ENCODE measurements at regions of chr2 and their contacts with region 1.

Region 1: DNA sequence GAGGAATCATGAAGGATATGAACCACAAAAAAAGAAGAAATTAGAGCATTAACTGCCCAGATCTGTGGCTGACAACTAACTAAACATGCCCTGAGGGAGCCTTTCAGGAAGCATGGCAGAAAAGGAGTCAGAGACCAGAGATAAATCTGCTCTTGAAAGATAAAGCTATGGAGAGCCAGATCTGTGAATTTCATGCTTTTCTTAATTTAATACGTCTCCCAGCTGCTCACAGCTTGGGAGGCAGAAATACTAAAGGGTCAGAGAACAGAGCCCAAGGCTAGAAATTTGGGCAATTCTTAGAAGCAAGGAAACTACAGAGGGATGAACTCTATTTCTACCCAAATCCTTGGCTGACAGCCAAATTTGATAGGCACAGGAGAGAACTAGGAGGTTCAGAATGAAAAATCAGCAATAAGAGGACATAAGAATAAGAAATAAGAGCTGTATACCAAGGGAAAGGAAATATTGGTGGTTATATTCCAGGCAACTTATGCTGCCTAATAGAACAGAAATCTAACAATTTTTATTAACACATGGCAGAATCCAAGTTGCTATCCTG is 222.9 kb upstream of the DPP10 start:
- DNase-seq: no peak
- ATAC-seq: no peak
- H3K4me3 ChIP-seq: no peak overlapping the region
- H3K27ac ChIP-seq: no peak overlapping the region
- H3K4me1 ChIP-seq: no peaks in the 10 kb centered on the region
- H3K27me3 ChIP-seq: no peaks in the 10 kb centered on the region
- CTCF ChIP-seq: no peak
- EP300 ChIP-seq: no peak
- POLR2A ChIP-seq: no peak
- RAD21 ChIP-seq: no peak

Region 2: DNA sequence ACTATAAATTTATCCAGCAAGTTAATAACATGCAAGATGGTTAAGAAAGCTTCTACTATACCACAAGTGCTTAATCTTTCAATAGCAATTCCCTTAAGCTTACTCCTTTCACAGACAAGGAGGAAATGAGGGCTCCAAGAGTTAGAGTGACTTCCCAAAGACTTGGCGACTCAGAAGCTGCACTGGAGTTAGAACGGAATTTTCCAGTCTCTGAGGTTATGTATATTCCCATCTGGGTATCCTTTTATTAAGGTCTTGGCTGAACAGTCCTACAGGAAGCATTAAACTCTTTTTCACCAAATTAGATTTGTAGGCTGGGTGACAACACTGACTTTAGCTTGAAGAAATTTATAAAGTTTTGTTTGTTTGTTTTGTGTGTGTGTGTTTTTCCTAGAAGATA is 34.0 kb before region 1 on chr2:
- CTCF ChIA-PET with region 1: no interaction called
- POLR2A ChIA-PET with region 1: no interaction called
- in situ Hi-C with region 1: no loop called
- intact Hi-C with region 1: no loop called
- DNase-seq: no peak
- ATAC-seq: no peak
- H3K4me3 ChIP-seq: no peak overlapping the region
- H3K27ac ChIP-seq: no peak overlapping the region
- H3K4me1 ChIP-seq: no peaks in the 10 kb centered on the region
- H3K27me3 ChIP-seq: no peaks in the 10 kb centered on the region; a peak in 1 of 5 replicates
- CTCF ChIP-seq: no peak
- EP300 ChIP-seq: no peak
- POLR2A ChIP-seq: no peak
- RAD21 ChIP-seq: no peak

Region 3: GRCh38 chr2:114238910-114239559 is 19.5 kb after region 1 on chr2:
- CTCF ChIA-PET with region 1: no interaction called
- POLR2A ChIA-PET with region 1: no interaction called
- in situ Hi-C with region 1: no loop called
- intact Hi-C with region 1: loop called (anchors 1 kb)
- DNase-seq: no peak
- ATAC-seq: no peak
- H3K4me3 ChIP-seq: no peak overlapping the region
- H3K27ac ChIP-seq: no peak overlapping the region
- H3K4me1 ChIP-seq: no peaks in the 10 kb centered on the region
- H3K27me3 ChIP-seq: no peaks in the 10 kb centered on the region
- CTCF ChIP-seq: no peak
- EP300 ChIP-seq: no peak
- POLR2A ChIP-seq: no peak
- RAD21 ChIP-seq: no peak

Measured in HepG2 (cell line).